ENCODE measurements at regions of chr15 and their contacts with region 1.

Region 1: DNA sequence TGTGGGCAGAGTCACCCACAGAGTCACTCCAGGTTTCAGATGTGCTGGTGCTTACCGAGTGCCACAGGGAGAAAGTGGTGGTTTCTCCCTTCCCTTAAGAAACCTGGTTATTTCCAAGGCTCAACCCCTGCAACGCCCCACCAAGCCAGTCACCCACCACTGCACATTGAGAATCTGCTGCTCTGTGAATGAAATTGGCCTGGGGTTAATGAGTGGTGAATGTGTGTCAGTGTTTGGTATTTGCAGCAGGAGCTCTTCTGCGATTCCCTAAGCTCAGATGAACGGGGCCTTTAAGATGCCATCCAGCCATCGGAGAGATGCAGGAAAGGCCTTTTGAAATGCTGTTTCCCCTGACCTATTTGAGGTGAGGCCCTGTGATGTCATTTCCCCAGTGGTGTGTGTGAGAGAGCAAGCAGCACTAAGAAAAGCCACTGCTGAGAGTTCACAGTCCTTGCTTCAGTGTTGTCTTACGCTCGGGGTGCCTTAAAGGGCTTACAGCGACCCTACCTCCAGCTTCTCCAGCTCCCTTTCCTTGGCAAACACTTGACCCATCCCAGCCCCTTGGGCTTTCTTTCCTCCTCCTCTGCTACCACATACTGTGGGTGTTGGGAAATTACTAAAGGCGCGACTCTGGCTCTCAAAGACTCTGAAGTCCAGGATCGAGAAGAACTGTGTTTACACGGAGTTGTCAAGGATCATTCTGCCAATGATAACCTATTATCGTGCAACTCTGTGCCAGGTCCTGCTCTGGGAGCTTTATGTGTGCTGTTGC is 68.9 kb downstream of the SMAD3 start:
- DNase-seq: peak; percentile 52
- ATAC-seq: peak; percentile 69

Region 2: GRCh38 chr15:65156692-65157091 is 1977.6 kb before region 1 on chr15:
- intact Hi-C with region 1: no loop called
- DNase-seq: no peak
- ATAC-seq: no peak

Region 3: GRCh38 chr15:66780172-66780972 is 353.9 kb before region 1 on chr15:
- intact Hi-C with region 1: no loop called
- DNase-seq: no peak
- ATAC-seq: no peak

Region 4: DNA sequence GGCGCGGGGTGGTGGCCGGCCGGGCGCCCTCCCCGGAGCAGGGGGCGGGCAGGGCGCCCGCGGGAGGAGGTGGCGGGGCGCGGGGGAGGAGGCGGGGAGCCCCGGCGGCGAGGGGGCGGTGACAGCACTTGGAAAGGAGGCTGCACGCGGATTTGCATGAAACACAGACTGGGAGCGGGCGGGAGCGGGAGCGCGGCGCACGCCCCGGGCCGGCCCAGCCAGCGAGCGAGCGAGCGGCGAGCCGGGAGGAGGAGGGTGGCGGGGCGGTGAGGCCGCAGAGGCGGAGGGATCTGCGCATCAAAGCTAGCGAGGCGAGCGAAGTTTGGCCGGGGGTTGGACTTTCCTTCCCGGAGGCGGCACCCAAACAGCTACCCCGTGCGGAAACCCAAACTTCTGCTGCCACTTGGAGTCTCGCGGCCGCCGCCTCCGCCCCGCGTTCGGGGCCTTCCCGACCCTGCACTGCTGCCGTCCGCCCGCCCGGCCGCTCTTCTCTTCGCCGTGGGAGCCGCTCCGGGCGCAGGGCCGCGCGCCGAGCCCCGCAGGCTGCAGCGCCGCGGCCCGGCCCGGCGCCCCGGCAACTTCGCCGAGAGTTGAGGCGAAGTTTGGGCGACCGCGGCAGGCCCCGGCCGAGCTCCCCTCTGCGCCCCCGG is 68.7 kb before region 1 on chr15 and contains the start of gene SMAD3:
- intact Hi-C with region 1: loop called (anchors 10 kb)
- DNase-seq: peak; percentile 94
- ATAC-seq: peak; percentile 90
- total RNA-seq, gene SMAD3: 58.8 TPM

Region 5: DNA sequence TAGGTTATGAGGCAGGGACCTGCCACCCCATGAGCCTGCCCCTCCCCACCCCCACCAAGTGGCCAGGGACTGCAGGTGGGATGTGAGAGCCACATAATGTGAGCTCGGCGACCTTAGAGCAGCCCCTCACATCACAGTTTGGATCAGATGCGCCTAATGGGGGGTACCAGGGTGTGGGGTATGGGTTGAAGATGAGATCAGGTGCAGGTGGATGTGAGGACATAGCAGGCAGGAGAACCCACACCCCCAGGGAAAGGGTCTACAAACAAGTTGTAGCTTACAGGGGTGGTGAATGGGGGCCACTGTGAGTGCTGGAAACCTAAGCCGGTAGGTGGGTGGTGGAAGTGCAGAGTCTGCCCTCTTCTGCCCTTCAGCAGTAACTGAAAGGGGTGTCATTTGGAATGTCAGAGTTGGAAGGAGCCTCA is 1538.5 kb after region 1 on chr15:
- intact Hi-C with region 1: no loop called
- DNase-seq: peak; percentile 51
- ATAC-seq: no peak

Measured in sciatic nerve (tissue), 2 donors.